Activated T-helper 2 cell treated with anti-CD3 and anti-CD28 coated beads, Interferon-gamma antibody, Interleukin-2, Interleukin-4, amounts not matched to agents 10 μg/mL and 5 μg/mL and 100 μg/mL, durations not matched to agents 14 hours and 24 hours and 36 hours (primary cell): ENCODE measurements at regions of chr15 and their contacts with region 1.

Region 1: GRCh38 chr15:41695750-41696426 is 35.7 kb downstream of the MGA start:
- DNase-seq: peak; percentile 33
- H3K4me3 Mint-ChIP-seq: peak overlapping the region; percentile 55
- H3K27ac Mint-ChIP-seq: peak overlapping the region; percentile 74
- H3K4me1 Mint-ChIP-seq: peaks cover 25% of the 10 kb centered on the region
- H3K27me3 Mint-ChIP-seq: no peaks in the 10 kb centered on the region

Region 2: GRCh38 chr15:41660235-41661077 is 35.4 kb before region 1 on chr15 and contains the start of gene MGA:
- intact Hi-C with region 1: loop called (anchors 5 kb)
- DNase-seq: peak; percentile 88
- H3K4me3 Mint-ChIP-seq: peak within 1 kb of the TSS; percentile 88
- H3K27ac Mint-ChIP-seq: peak within 1 kb of the TSS; percentile 87
- H3K4me1 Mint-ChIP-seq: peaks cover 32% of the 10 kb centered on the region
- H3K27me3 Mint-ChIP-seq: peaks cover 25% of the 10 kb centered on the region
- total RNA-seq, gene MGA: 37.7 and 38.2 TPM in 2 replicates

Region 3: DNA sequence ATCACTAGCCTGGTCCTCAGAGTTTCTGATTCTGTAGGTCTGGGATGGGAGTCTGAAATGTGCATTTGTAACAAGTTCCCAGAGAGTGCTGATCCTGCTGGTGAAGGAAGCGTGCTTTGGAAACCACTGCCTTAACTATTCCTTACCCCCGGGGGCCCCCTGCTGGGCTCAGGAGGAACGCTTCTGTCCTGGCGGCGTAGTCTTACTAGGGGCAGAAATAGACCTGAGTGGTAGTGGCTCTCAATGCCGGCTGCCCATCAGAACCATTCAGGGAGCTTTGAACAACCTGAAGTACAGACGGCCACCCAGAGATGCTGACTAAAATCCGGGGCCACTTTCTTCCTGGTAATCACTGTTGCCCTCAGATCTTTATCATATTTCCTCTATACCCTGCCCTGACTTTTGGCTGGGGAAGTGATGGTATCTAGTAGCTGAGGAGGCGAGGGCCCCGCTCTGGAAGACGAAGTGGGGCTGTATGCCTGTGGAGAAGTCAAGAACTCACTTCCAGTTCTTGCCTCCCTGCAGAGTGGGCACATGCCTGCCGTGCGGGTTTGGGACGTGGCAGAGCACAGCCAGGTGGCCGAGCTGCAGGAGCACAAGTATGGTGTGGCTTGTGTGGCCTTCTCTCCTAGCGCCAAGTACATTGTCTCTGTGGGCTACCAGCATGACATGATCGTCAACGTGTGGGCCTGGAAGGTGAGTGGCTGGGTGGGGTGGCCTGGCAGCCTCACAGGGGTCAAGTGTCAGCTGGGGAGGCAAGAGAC is 115.7 kb after region 1 on chr15:
- intact Hi-C with region 1: loop called (anchors 5 kb)
- DNase-seq: peak; percentile 59
- H3K4me3 Mint-ChIP-seq: no peak overlapping the region
- H3K27ac Mint-ChIP-seq: peak overlapping the region; percentile 36
- H3K4me1 Mint-ChIP-seq: peaks cover 26% of the 10 kb centered on the region
- H3K27me3 Mint-ChIP-seq: no peaks in the 10 kb centered on the region

Region 4: GRCh38 chr15:41904541-41905005 is 208.7 kb after region 1 on chr15:
- intact Hi-C with region 1: loop called (anchors 1 kb)
- DNase-seq: peak; percentile 56
- H3K4me3 Mint-ChIP-seq: no peak overlapping the region
- H3K27ac Mint-ChIP-seq: no peak overlapping the region
- H3K4me1 Mint-ChIP-seq: peaks cover 4% of the 10 kb centered on the region
- H3K27me3 Mint-ChIP-seq: no peaks in the 10 kb centered on the region